H1 (cell line): ENCODE measurements at regions of chr11 and their contacts with region 1.

Region 1: GRCh38 chr11:86678823-86679222 is 6.4 kb upstream of the ME3 start:
- DNase-seq: no peak
- H3K4me3 ChIP-seq: no peak overlapping the region
- H3K27ac ChIP-seq: no peak overlapping the region
- H3K4me1 ChIP-seq: peaks cover 0 to 10% (median 5%) of the 10 kb centered on the region in 4 experiments; a peak in 3 of 7 replicates
- H3K27me3 ChIP-seq: no peaks in the 10 kb centered on the region; a peak in 1 of 7 replicates
- CTCF ChIP-seq: no peak
- EP300 ChIP-seq: no peak
- POLR2A ChIP-seq: no peak
- RAD21 ChIP-seq: no peak

Region 2: GRCh38 chr11:86802601-86803051 is 123.8 kb after region 1 on chr11:
- CTCF ChIA-PET with region 1: interaction called, 10 read pairs
- POLR2A ChIA-PET with region 1: no interaction called
- DNase-seq: no peak
- H3K4me3 ChIP-seq: no peak overlapping the region
- H3K27ac ChIP-seq: no peak overlapping the region
- H3K4me1 ChIP-seq: peaks cover 0 to 10% (median 7%) of the 10 kb centered on the region in 4 experiments; a peak in 5 of 7 replicates
- H3K27me3 ChIP-seq: peaks cover 0 to 16% (median 13%) of the 10 kb centered on the region in 4 experiments; a peak in 4 of 7 replicates
- CTCF ChIP-seq: peak in 2 of 3 experiments; percentile 33 to 63; a peak in 3 of 4 replicates
- EP300 ChIP-seq: no peak
- POLR2A ChIP-seq: no peak
- RAD21 ChIP-seq: peak; percentile 20 to 45; a peak in 2 of 4 replicates